MCF 10A (cell line): ENCODE measurements at regions of chr6 and their contacts with region 1.

Region 1: GRCh38 chr6:63635588-63636517 is at the start of gene PHF3:
- DNase-seq: peak; percentile 86
- H3K4me3 Mint-ChIP-seq: peak within 1 kb of the TSS; percentile 89
- H3K27ac Mint-ChIP-seq: peak within 1 kb of the TSS; percentile 95
- H3K4me1 Mint-ChIP-seq: peaks cover 24% of the 10 kb centered on the region
- H3K27me3 Mint-ChIP-seq: no peaks in the 10 kb centered on the region
- CTCF ChIP-seq: peak; percentile 5
- total RNA-seq, gene PHF3: 41.0 and 46.4 TPM in 2 replicates

Region 2: GRCh38 chr6:63598049-63599036 is 37.5 kb before region 1 on chr6:
- CTCF ChIA-PET with region 1: interaction called, 18 read pairs
- POLR2A ChIA-PET with region 1: interaction called, 50 read pairs
- intact Hi-C with region 1: loop called (anchors 5 kb)
- DNase-seq: peak; percentile 84
- H3K4me3 Mint-ChIP-seq: peak overlapping the region; percentile 72
- H3K27ac Mint-ChIP-seq: peak overlapping the region; percentile 4
- H3K4me1 Mint-ChIP-seq: peaks cover 7% of the 10 kb centered on the region
- H3K27me3 Mint-ChIP-seq: no peaks in the 10 kb centered on the region
- CTCF ChIP-seq: peak; percentile 79

Region 3: GRCh38 chr6:63649269-63649668 is 13.4 kb after region 1 on chr6:
- CTCF ChIA-PET with region 1: interaction called, 3 read pairs
- POLR2A ChIA-PET with region 1: interaction called, 35 read pairs
- intact Hi-C with region 1: no loop called
- DNase-seq: peak; percentile 52
- H3K4me3 Mint-ChIP-seq: no peak overlapping the region
- H3K27ac Mint-ChIP-seq: no peak overlapping the region
- H3K4me1 Mint-ChIP-seq: peaks cover 16% of the 10 kb centered on the region
- H3K27me3 Mint-ChIP-seq: no peaks in the 10 kb centered on the region
- CTCF ChIP-seq: no peak

Region 4: DNA sequence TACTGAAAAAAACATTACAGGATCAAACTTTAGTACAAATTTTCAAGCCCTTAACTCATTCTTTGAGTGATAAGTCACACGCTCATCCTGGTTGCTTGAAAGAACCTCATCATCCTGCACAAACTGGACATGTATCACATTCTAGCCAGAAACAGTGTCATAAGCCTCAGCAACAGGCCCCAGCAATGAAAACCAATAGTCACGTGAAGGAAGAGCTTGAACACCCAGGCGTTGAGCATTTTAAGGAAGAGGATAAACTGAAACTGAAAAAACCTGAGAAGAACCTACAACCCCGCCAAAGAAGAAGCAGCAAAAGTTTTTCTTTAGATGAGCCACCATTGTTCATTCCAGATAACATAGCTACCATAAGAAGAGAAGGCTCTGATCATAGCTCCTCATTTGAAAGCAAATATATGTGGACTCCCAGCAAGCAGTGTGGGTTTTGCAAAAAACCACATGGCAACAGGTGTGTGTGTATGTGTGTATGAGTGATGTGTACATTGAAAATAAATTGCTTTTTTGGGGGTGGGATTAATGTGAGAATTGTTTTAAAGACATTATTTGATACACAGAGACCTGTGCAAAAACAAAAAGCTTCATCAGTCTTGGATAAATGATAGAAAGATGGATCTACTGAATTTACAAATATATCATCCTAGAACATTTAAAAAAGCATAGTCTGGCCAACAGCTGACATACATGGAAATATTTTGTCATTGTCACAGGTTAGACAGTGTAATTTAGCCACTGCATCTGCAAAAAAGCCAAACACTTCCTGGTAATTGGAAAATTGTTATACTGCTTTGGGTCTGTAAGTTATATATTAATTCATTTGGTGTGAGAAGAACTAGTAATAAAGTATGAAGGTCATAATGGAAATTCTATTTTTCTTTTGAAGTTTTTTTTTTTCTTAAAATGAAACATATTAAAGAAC is 49.9 kb after region 1 on chr6:
- CTCF ChIA-PET with region 1: no interaction called
- POLR2A ChIA-PET with region 1: interaction called, 4 read pairs
- intact Hi-C with region 1: loop called (anchors 5 kb)
- DNase-seq: no peak
- H3K4me3 Mint-ChIP-seq: no peak overlapping the region
- H3K27ac Mint-ChIP-seq: no peak overlapping the region
- H3K4me1 Mint-ChIP-seq: no peaks in the 10 kb centered on the region
- H3K27me3 Mint-ChIP-seq: no peaks in the 10 kb centered on the region
- CTCF ChIP-seq: no peak